GM12878 (cell line): ENCODE measurements at regions of chr6 and their contacts with region 1.

Region 1: DNA sequence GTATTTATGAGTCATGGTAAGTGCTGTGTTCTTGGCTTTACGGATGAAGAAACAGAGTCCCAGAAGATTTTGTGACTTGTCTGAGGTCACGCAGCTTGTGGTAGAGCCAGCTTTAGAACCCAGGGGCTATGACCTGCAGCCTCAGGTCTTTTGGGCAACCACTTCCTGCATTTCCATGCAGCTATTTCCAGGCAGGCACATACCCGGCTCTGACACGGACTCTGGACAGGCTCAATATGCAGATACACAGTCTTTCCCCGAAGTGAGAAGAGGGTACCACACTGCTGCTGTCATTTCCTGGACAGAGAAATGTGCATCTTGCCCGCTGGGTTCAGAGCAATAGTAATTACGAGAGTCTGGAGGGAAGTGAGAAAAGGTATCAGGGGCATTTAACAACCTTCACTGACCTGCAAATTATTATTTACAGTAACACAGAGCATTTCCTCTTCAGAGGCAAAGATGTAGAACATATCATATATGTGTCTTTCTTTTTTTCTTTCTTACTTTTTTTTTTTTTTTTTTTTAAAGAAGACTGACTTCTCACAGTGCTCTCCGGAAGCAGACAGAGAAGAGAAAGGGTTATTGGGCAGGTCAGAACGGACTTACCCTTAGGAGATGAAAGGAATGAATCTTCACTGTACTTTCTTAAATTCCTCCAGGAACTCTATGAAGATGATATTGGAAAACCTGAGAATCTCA is 185.1 kb downstream of the CLIC5 start:
- DNase-seq: peak; percentile 86
- ATAC-seq: peak; percentile 95
- H3K4me3 ChIP-seq: peak overlapping the region; percentile 26; the same call in 1 of the 2 replicates
- H3K27ac ChIP-seq: 0 out of 2 replicates have a peak overlapping the region, but pooled peaks have one; percentile 11
- H3K4me1 ChIP-seq: peaks cover 24% of the 10 kb centered on the region
- H3K27me3 ChIP-seq: no peaks in the 10 kb centered on the region; a peak in 1 of 4 replicates
- CTCF ChIP-seq: no peak
- EP300 ChIP-seq: peak; percentile 83 to 97; a peak in 3 of 4 replicates
- POLR2A ChIP-seq: no peak
- RAD21 ChIP-seq: no peak

Region 2: DNA sequence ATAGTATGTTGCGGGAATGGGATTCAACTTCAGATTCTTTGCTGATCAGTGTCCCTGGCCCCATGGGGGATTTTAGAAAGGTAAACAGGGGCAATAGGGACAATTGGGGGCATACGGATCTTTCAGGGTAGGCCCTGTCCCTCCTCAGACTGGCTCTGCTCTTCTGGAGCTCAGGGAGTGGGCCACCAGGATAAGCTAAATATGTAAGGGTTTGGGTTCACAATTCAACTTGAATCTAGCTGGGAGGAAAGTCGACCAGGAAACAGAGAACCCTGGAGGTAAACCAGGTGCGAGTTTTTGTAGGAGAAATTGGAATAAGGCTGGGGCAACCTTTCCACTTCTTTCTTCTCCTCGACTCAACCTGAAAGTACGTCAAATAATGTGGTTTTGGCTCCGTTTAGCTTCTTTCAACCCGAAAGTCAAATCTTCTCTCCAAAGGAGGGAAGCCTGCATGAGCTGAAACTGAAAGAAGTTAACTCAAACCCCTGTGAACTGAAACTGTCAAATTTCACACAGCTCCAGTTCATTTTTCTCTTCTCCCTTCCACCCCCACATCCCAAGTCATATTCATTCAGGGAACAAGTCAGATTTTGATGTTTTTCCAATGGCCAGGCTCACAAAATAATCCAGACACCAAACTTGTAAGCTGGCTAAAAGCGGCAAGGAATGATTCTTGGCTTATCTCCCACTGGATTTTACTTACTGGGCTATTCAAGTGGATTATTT is 93.1 kb before region 1 on chr6:
- CTCF ChIA-PET with region 1: interaction called, 4 read pairs
- POLR2A ChIA-PET with region 1: no interaction called
- RAD21 ChIA-PET with region 1: interaction called, 4 read pairs
- SMC1A ChIA-PET with region 1: interaction called, 10 read pairs
- in situ Hi-C with region 1: no loop called
- intact Hi-C with region 1: loop called (anchors 2 kb)
- DNase-seq: peak; percentile 77
- ATAC-seq: peak; percentile 83
- H3K4me3 ChIP-seq: no peak overlapping the region
- H3K27ac ChIP-seq: peak overlapping the region; percentile 42; the same call in 1 of the 2 replicates
- H3K4me1 ChIP-seq: peaks cover 20% of the 10 kb centered on the region
- H3K27me3 ChIP-seq: no peaks in the 10 kb centered on the region; a peak in 2 of 4 replicates
- CTCF ChIP-seq: no peak
- EP300 ChIP-seq: peak; percentile 92 to 96
- POLR2A ChIP-seq: no peak
- RAD21 ChIP-seq: peak; percentile 15; the same call in 1 of the 2 replicates